ENCODE measurements at regions of chr15 and their contacts with region 1.

Region 1: DNA sequence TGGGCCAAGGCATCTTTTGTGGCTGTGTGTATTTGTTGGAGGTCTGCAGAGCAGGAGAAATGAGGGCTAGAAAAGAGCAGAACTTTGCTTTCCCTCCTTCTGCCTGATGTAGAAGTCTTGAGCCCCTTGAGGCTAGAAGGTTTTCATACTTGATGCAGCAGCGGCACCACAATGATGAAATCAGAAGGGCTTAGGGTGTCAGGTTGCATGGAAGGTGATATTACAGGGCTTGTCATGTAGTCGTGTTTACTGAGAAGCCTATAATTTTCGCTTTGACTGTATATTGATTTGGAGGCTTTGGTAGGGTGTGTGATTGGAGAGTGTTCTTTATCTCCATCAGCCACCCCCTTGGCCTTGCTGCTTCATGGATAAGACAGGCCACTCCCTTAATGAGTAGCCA is 339.8 kb downstream of the THSD4 start:
- DNase-seq: no peak
- H3K4me3 ChIP-seq: no peak overlapping the region
- H3K4me3 Mint-ChIP-seq: no peak overlapping the region
- H3K27ac Mint-ChIP-seq: no peak overlapping the region
- H3K4me1 ChIP-seq: no peaks in the 10 kb centered on the region; the same call in 1 of the 2 replicates
- H3K4me1 Mint-ChIP-seq: peaks cover 16% of the 10 kb centered on the region
- H3K27me3 ChIP-seq: no peaks in the 10 kb centered on the region
- H3K27me3 Mint-ChIP-seq: no peaks in the 10 kb centered on the region
- CTCF ChIP-seq: no peak

Region 2: GRCh38 chr15:71511796-71512681 is 56.9 kb after region 1 on chr15:
- CTCF ChIA-PET with region 1: interaction called, 3 read pairs
- POLR2A ChIA-PET with region 1: no interaction called
- intact Hi-C with region 1: loop called (anchors 10 kb)
- DNase-seq: peak; percentile 45 to 47
- H3K4me3 ChIP-seq: no peak overlapping the region
- H3K4me3 Mint-ChIP-seq: no peak overlapping the region
- H3K27ac Mint-ChIP-seq: no peak overlapping the region
- H3K4me1 ChIP-seq: peaks cover 33% of the 10 kb centered on the region
- H3K4me1 Mint-ChIP-seq: peaks cover 23% of the 10 kb centered on the region
- H3K27me3 ChIP-seq: no peaks in the 10 kb centered on the region
- H3K27me3 Mint-ChIP-seq: no peaks in the 10 kb centered on the region
- CTCF ChIP-seq: no peak